OCI-LY7 (cell line): ENCODE measurements at regions of chr13 and their contacts with region 1.

Region 1: DNA sequence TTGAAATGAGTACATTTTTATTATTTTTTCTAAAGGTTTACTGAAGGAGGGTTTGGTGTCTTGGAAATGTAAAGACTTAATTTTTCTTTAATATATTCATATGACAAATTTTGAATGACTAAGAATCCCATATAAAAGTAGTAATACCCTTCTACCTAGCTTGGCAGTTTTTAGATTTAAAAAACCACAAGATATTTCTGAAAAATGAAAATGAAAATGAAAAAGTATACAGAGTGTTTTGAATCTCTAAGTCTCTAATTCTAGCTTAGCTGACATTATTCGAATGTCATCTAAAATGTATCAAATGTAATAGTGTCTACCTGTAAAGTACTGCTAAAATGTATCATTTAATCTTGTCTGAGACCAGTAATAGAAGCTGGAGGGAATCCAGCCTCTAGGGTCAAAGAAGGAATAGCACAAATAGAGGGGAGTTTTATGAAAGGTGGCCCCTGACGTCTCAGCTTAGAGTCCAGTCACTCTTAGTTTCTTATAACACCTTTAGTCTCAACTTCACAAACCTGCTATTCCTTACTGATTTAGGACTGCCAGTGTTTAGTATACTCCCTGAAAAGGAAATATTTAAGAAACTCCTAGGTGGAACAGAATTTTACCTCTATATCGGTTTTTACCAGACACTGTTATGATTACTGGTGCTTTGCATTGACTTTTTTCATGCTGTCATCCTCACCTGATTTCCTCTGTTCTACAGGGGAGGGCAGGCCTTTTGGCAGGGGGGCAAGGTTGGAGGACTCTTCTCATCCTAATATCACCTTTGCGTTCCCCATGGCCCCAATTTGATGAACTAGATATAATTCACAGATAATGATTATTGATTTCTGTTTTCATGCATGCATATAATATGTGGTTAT is 16.2 kb upstream of the MIR17HG start:
- DNase-seq: no peak
- H3K4me3 ChIP-seq: no peak overlapping the region
- H3K27ac ChIP-seq: no peak overlapping the region
- H3K4me1 ChIP-seq: no peaks in the 10 kb centered on the region
- CTCF ChIP-seq: no peak

Region 2: GRCh38 chr13:90686442-90686841 is 644.8 kb before region 1 on chr13:
- CTCF ChIA-PET with region 1: no interaction called
- POLR2A ChIA-PET with region 1: no interaction called
- intact Hi-C with region 1: no loop called
- DNase-seq: no peak
- H3K4me3 ChIP-seq: no peak overlapping the region
- H3K27ac ChIP-seq: no peak overlapping the region
- H3K4me1 ChIP-seq: no peaks in the 10 kb centered on the region
- CTCF ChIP-seq: no peak

Region 3: GRCh38 chr13:91348906-91349435 is 17.7 kb after region 1 on chr13:
- CTCF ChIA-PET with region 1: interaction called, 3 read pairs
- POLR2A ChIA-PET with region 1: interaction called, 29 read pairs
- intact Hi-C with region 1: no loop called
- DNase-seq: peak; percentile 100
- H3K4me3 ChIP-seq: peak overlapping the region; percentile 64
- H3K27ac ChIP-seq: peak overlapping the region; percentile 75
- H3K4me1 ChIP-seq: peaks cover 57% of the 10 kb centered on the region
- CTCF ChIP-seq: no peak